Activated CD4-positive, alpha-beta T cell treated with anti-CD3 and anti-CD28 coated beads, Interleukin-2, amount 10 ng/mL, durations not matched to agents 24 days and 14 days (primary cell): ENCODE measurements at regions of chr9 and their contacts with region 1.

Region 1: DNA sequence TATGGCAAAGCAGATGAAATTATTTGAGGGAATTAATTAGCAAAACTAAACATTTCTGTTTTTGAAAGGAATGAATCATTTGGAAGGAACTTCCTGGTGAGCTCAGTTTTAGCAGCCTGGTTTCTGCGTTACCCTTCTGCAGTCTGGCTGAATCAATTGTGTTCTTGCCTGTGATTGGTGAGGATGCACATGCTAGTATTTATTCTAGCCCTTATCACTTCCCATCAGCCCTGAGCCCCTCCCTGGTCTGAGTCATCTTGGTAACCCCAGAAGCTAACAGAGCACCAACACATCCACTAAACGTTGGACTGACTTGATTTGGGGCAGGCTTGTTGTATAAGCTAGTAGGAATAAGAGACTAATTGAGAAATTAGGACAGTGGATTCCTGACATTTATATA is 6.6 kb downstream of the TJP2 start:
- DNase-seq: peak; percentile 86
- H3K4me3 Mint-ChIP-seq: peak overlapping the region; percentile 59
- H3K27ac Mint-ChIP-seq: peak overlapping the region; percentile 84
- H3K4me1 Mint-ChIP-seq: peaks cover 55% of the 10 kb centered on the region
- H3K27me3 Mint-ChIP-seq: peaks cover 4% of the 10 kb centered on the region

Region 2: DNA sequence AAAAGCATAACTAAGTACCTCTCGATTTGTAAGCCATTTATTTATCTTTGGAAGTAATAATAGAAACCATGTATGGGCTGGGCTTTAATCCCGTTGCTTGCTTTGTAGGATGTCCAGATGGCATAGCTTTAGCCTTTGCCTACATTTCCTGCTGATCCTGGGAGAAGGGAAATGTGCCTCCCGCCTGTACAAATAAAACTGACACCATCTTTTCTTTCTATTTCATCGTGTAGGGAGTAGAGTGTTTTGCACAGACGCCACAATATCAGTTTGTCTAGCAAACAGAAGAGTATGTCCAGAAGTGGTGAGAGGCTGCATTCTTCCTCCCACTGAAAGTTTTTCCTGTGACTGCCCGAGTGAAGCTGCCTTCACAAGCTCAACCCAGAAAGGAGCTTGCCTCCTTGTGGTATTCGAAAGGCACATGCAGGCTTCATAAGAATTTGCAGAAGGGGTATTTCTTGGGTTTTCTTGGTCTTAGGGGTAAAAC is 31.3 kb before region 1 on chr9:
- intact Hi-C with region 1: no loop called
- DNase-seq: no peak
- H3K4me3 Mint-ChIP-seq: no peak overlapping the region
- H3K27ac Mint-ChIP-seq: no peak overlapping the region
- H3K4me1 Mint-ChIP-seq: no peaks in the 10 kb centered on the region
- H3K27me3 Mint-ChIP-seq: peaks cover 2% of the 10 kb centered on the region

Region 3: GRCh38 chr9:69168709-69169217 is 11.9 kb before region 1 on chr9:
- intact Hi-C with region 1: loop called (anchors 1 kb)
- DNase-seq: peak; percentile 86
- H3K4me3 Mint-ChIP-seq: peak overlapping the region; percentile 83
- H3K27ac Mint-ChIP-seq: peak overlapping the region; percentile 91
- H3K4me1 Mint-ChIP-seq: peaks cover 34% of the 10 kb centered on the region
- H3K27me3 Mint-ChIP-seq: peaks cover 13% of the 10 kb centered on the region